ENCODE measurements at regions of chr4 and their contacts with region 1.

Region 1: GRCh38 chr4:61485056-61485455 is 284.9 kb downstream of the ADGRL3 start:
- DNase-seq: no peak
- H3K4me3 Mint-ChIP-seq: no peak overlapping the region
- H3K27ac Mint-ChIP-seq: no peak overlapping the region
- H3K4me1 Mint-ChIP-seq: no peaks in the 10 kb centered on the region
- H3K27me3 Mint-ChIP-seq: no peaks in the 10 kb centered on the region

Region 2: DNA sequence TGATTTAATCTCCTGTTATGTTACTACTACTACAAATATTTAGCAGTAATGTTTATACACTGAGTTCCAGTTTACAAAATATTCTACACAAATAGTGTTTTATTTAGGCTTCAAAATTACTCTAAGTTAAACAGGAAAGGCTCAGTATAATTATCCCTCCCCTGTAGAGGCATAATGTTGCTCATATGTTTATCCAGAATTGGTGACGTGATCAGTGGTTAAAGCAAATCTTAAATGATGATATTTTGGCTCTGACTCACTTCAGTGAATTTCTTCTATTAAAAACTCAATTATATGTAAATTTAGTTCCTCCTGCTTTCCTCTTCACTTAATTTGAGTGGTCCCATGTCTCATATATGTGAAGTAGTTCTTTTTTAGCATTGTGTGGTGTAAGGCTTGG is 153.5 kb after region 1 on chr4:
- CTCF ChIA-PET with region 1: no interaction called
- POLR2A ChIA-PET with region 1: interaction called, 10 read pairs
- DNase-seq: no peak
- H3K4me3 Mint-ChIP-seq: no peak overlapping the region
- H3K27ac Mint-ChIP-seq: no peak overlapping the region
- H3K4me1 Mint-ChIP-seq: no peaks in the 10 kb centered on the region
- H3K27me3 Mint-ChIP-seq: no peaks in the 10 kb centered on the region